Activated CD8-positive, alpha-beta T cell treated with anti-CD3 and anti-CD28 coated beads, Interleukin-2, amount 10 ng/mL, durations not matched to agents 7 days and 5 days (primary cell): ENCODE measurements at regions of chr7 and their contacts with region 1.

Region 1: DNA sequence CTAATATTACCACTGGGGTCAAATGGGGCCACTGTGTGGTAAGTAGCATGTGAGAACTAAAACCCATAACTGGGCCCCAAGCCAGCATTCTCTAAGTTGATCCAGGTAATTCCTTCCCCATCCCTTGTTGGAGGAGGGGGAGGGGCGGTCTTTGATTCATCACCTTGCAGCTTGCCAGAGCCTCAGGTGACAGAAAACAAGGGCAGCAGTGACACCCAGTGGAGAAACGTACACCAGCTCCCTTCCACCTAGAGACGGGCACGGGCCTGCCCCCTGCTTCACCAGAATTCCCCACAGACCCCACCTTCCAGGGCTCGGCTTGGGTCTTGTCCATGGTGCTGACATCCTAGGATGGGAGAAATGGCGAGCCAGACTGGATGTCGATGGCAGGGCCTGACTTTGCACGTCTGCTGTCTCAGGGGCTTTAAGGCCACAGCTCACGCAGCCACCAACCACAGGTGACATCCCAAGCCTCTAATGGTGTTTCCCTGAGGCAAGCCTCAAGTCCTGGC is 102.0 kb downstream of the STRA8 start:
- DNase-seq: peak; percentile 42
- ATAC-seq: no peak
- H3K4me3 Mint-ChIP-seq: no peak overlapping the region
- H3K27ac Mint-ChIP-seq: no peak overlapping the region
- H3K4me1 Mint-ChIP-seq: peaks cover 3% of the 10 kb centered on the region
- H3K27me3 Mint-ChIP-seq: no peaks in the 10 kb centered on the region

Region 2: DNA sequence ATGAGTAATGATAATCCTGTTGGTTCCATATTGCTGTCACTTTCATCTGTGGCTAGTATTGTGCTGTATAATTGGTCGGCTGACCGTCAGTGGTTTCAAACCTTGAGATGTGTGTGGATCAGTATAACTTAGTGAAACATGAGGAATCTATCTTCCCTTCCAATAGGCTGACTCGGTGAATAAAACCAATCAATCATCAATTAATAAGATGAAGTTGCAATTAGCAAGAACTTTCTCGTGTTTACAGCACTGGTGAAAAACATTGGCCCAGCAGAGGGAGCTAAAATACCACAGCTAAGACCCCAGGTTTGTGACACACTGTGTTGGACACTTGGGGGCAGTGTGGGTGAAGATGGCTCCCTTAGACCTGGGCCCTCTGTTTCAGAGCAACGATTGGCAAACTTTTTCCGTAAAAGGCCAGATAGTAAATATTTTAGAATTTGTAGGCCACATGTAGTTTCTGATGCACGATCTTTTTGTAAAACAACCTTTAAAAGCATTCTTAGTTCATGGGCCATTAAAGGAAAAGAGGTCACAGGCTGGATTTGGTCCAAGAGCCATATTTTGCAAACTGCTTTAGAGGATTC is 54.2 kb before region 1 on chr7:
- CTCF ChIA-PET with region 1: interaction called, 43 read pairs
- POLR2A ChIA-PET with region 1: no interaction called
- DNase-seq: peak; percentile 91
- ATAC-seq: peak; percentile 99
- H3K4me3 Mint-ChIP-seq: no peak overlapping the region
- H3K27ac Mint-ChIP-seq: no peak overlapping the region
- H3K4me1 Mint-ChIP-seq: peaks cover 17% of the 10 kb centered on the region
- H3K27me3 Mint-ChIP-seq: peaks cover 13% of the 10 kb centered on the region